HEK293 (cell line): ENCODE measurements at regions of chr19 and their contacts with region 1.

Region 1: DNA sequence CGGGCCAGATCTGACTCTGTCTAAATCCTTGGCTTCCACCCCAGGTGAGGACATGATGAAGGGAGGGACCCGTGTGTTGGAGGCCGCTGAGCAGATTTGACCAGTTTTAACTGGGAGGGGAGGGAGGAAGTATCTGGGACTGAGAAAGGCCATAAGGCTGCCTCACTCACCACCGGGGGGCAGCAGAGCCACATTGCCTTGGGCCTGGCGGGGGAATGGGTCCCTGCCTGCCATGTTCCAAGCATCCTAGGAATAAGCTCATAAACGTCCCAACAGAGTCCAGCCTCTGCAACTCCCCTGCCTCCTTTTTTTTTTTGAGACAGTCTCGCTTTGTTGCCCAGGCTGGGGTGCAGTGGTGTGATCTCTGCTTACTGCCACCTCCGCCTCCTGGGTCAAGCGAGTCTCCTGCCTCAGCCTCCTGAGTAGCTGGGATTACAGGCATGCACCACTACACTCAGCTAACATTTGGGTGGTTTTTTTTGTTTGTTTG is 15.5 kb downstream of the MAST3 start:
- H3K4me3 ChIP-seq: no peak overlapping the region
- H3K27ac ChIP-seq: no peak overlapping the region
- H3K4me1 ChIP-seq: peaks cover 3% of the 10 kb centered on the region; the same call in 1 of the 2 replicates
- CTCF ChIP-seq: peak; percentile 90

Region 2: DNA sequence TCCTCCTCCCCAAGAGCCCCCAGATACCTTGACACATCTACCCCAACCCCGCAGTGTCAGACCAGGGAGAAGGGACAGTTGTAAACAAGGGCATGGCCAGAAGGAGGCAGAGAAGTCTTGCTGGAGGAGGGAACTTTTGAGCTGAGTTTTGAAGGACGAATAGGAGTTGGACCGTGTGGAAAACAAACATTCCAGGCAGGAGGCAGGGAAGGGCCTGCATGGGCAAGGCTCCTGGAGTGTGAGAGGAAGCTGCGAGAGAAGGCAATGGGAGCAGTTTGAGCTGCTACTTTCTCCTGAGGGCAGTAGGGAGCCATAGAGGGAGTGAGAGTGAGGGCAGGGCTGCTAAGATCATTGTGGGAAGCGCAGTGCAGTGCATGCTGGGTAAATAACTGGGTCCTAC is 49.6 kb before region 1 on chr19:
- CTCF ChIA-PET with region 1: interaction called, 12 read pairs
- POLR2A ChIA-PET with region 1: no interaction called
- H3K4me3 ChIP-seq: no peak overlapping the region
- H3K27ac ChIP-seq: no peak overlapping the region
- H3K4me1 ChIP-seq: no peaks in the 10 kb centered on the region
- CTCF ChIP-seq: peak; percentile 51; the same call in 1 of the 2 replicates

Region 3: DNA sequence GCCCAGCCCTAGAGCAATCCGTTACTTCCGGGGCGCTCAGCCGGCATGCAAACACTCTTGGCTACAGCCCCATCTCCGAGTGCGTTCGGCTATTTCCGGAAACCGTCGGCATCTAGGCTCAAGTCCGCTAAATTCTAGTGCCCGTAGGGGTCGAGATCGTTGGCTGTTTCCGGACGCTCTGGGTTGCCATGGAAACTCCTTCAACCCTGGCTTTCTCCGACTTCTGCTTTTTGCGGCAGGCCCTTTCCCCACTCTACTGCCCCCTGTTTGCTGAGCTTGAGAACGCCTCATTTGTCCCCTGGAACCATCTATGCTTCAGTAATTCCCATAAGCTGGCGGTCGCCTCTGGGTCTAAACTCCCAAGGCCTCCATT is 39.4 kb after region 1 on chr19:
- CTCF ChIA-PET with region 1: interaction called, 24 read pairs
- POLR2A ChIA-PET with region 1: interaction called, 7 read pairs
- H3K4me3 ChIP-seq: peak overlapping the region; percentile 56
- H3K27ac ChIP-seq: peak overlapping the region; percentile 74
- H3K4me1 ChIP-seq: peaks cover 7% of the 10 kb centered on the region
- CTCF ChIP-seq: peak; percentile 87

Region 4: DNA sequence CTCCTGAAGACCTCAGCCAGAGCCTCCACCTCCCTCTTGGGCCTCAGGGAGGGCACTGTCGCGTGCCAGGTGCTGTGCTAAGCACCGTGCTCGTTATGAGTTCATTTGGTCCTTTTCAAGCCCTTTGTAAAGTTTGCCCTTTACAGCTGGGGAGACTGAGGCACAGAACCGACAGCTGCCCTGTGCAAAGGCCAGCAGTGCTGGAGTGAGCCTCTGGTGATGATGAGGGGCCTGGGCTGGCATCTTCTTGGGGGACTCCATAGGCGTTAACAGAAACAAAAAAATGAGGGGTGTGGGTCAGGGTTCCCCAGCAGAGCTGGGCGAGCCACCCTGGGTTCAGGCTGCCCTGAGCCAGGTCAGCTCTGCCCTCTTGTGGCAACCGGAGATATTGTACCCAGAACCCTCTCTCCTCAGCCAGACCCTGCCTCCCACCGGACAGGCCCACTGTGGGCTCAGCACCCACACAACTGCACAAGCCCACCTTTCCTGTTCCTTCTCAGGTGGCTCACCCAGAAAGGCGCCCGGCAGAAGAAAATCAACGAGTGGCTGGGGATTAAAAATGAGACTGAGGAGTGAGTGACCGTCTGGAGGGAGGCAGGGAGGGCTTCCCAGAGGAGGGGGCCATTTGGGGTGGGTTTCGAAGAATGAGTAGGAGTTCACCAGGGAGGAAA is 55.1 kb after region 1 on chr19:
- CTCF ChIA-PET with region 1: interaction called, 83 read pairs
- POLR2A ChIA-PET with region 1: interaction called, 3 read pairs
- H3K4me3 ChIP-seq: no peak overlapping the region
- H3K27ac ChIP-seq: no peak overlapping the region
- H3K4me1 ChIP-seq: no peaks in the 10 kb centered on the region
- CTCF ChIP-seq: peak; percentile 51; the same call in 1 of the 2 replicates

Region 5: DNA sequence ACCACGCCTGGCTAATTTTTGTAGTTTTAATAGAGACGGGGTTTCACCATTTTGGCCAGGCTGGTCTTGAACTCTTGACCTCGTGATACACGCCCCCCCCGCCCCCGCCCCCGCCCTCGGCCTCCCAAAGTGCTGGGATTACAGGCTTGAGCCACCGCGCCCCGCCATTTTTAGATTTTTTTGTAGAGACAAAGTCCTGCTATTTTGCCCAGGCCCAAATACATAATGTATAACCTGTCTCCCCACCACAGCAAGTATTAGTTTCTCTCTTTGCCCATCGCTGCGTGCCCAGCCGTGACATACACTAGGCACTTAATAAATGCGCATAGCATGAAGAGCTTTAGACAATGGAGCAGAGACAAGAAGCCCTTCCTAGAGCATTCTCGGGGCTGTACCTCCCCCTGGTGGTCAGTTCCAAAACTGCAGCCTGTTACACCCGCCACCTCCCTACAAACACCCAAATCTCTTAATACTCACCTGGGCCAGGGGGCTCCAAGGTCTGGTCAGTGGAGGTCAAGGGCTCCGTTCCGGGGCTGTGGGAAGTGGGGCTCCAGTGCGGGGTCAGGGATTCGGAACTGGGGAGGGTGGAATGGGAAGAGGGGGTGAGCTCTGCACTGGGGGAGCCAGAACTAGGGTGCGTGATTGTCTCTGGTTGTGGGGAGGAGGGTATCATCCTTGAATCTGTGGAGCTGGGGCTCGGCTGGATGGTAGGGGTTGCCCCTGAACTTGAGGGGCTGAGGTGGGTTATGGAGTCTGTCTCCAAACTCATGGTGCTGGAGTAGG is 138.7 kb after region 1 on chr19:
- CTCF ChIA-PET with region 1: interaction called, 52 read pairs
- POLR2A ChIA-PET with region 1: interaction called, 4 read pairs
- H3K4me3 ChIP-seq: no peak overlapping the region
- H3K27ac ChIP-seq: no peak overlapping the region
- H3K4me1 ChIP-seq: no peaks in the 10 kb centered on the region
- CTCF ChIP-seq: peak; percentile 80